Spleen (tissue), 13 donors: ENCODE measurements at regions of chr6 and their contacts with region 1.

Region 1: DNA sequence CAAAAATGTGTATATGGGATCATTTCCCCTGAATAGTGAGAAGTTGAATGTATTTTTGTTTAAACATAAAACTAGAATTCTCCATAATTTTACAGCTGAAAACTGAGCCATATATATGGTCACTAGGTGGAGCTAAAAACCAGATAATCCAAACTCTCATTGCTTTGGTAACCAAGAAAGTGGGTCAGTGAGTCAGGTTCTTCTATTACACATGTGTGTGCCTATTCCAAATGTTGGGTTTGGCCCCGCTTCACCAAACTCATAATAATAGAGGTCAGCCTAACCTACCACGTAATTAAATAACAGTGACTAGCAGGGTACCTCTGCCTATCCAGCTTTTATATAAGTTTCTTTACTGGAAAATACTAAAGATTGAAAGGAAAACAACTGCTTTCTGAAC is 19.3 kb upstream of the RNGTT start:
- DNase-seq: no peak
- H3K4me3 ChIP-seq: no peak overlapping the region
- H3K27ac ChIP-seq: no peak overlapping the region
- H3K4me1 ChIP-seq: peaks cover 0 to 12% (median 6%) of the 10 kb centered on the region in 6 donors
- H3K27me3 ChIP-seq: no peaks in the 10 kb centered on the region
- CTCF ChIP-seq: peak; percentile 59 to 82 (median 71)
- POLR2A ChIP-seq: no peak

Region 2: DNA sequence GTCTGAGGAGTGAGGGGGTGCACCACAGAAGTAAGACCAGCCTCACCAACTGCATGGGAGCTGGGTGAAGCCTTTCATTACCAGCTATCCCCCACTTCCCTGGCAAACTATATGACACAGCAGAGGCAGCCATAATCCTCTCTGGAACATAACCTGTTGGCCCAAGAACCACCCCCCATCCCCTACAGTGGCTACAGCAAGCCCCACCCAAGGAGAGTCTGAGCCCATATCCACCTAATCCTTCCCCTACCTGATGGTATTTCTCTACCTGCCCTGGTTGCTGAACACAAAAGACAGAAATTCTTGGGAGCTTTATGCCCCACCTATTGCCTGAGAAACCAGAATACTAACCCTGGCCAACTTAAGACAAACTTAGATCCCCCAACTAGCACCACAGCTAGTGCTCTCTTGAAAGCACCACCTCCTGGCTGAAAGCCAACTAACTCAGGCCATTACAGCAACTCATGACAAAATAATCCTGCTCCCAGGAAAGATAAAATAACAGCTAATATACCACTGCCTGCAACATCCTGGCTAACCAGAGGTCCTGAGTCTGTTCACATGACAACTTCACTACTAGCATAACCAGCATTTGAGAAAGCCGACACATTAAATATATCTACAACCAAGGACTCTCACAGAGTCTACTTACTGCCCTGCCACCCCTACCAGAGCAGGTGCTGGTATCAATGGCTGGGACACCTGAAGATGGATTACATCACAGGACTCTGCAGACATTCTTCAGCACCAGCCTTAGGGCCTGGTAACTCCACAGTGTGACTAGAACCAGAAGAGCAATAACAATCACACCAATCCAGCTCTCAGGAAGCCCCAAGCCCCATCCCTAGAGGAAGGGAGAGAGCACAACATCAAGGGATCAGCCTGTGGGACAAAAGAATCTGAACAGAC is 30.4 kb before region 1 on chr6:
- intact Hi-C with region 1: no loop called
- DNase-seq: no peak
- H3K4me3 ChIP-seq: no peak overlapping the region
- H3K27ac ChIP-seq: no peak overlapping the region
- H3K4me1 ChIP-seq: peaks cover 0 to 9% (median 0%) of the 10 kb centered on the region in 6 donors
- H3K27me3 ChIP-seq: no peaks in the 10 kb centered on the region
- CTCF ChIP-seq: no peak
- POLR2A ChIP-seq: no peak

Region 3: DNA sequence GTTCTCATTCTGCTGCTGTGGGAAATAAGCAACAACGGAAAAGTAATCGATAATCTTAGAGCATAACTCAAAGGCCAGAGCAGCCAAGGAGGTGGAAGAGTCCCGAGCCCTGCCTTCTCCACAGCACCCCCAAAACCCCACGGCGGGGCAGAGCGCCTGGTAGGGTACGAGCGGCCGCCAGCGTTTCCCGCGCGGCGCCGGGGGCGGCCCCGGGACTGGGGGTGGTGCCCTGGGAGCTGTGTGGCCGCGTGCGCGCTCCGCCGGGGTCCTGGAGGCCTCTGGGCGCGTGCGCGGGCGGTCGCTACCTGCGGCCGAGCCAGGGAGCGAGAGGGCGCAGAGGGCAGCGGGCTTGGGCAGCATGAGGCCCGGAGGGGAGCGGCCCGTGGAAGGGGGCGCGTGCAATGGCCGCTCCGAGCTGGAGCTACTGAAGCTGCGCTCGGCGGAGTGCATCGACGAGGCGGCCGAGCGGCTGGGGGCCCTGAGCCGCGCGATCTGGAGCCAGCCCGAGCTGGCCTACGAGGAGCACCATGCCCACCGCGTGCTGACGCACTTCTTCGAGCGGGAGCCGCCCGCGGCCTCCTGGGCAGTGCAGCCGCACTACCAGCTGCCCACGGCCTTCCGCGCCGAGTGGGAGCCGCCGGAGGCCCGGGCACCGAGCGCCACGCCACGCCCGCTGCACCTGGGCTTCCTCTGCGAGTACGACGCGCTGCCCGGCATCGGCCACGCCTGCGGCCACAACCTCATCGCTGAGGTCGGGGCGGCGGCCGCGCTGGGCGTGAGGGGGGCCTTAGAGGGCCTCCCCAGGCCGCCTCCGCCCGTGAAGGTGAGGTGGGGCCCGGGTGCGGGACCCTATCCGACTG is 163.3 kb after region 1 on chr6 and contains the start of gene PM20D2:
- intact Hi-C with region 1: loop called (anchors 10 kb)
- DNase-seq: peak; percentile 93
- H3K4me3 ChIP-seq: peak within 1 kb of the TSS; percentile 70 to 97 (median 86)
- H3K27ac ChIP-seq: peak within 1 kb of the TSS; percentile 66 to 86 (median 82)
- H3K4me1 ChIP-seq: peaks cover 3 to 34% (median 17%) of the 10 kb centered on the region in 6 donors
- H3K27me3 ChIP-seq: no peaks in the 10 kb centered on the region
- CTCF ChIP-seq: no peak
- POLR2A ChIP-seq: no peak
- total RNA-seq, gene PM20D2: 5.8 to 14.6 (median 8.3) TPM

Region 4: GRCh38 chr6:89242574-89243330 is 260.0 kb after region 1 on chr6:
- intact Hi-C with region 1: loop called (anchors 5 kb)
- DNase-seq: no peak
- H3K4me3 ChIP-seq: no peak overlapping the region
- H3K27ac ChIP-seq: no peak overlapping the region
- H3K4me1 ChIP-seq: peaks cover 0 to 15% (median 0%) of the 10 kb centered on the region in 6 donors
- H3K27me3 ChIP-seq: no peaks in the 10 kb centered on the region
- CTCF ChIP-seq: peak in 8 of 11 experiments; percentile 8 to 51 (median 38)
- POLR2A ChIP-seq: no peak

Region 5: GRCh38 chr6:89599727-89600126 is 617.0 kb after region 1 on chr6:
- intact Hi-C with region 1: loop called (anchors 10 kb)
- DNase-seq: no peak
- H3K4me3 ChIP-seq: no peak overlapping the region
- H3K27ac ChIP-seq: no peak overlapping the region
- H3K4me1 ChIP-seq: peaks cover 0 to 18% (median 10%) of the 10 kb centered on the region in 6 donors
- H3K27me3 ChIP-seq: no peaks in the 10 kb centered on the region
- CTCF ChIP-seq: no peak
- POLR2A ChIP-seq: no peak